Activated CD4-positive, alpha-beta memory T cell treated with anti-CD3 and anti-CD28 coated beads for 36 hours (primary cell): ENCODE measurements at regions of chr7 and their contacts with region 1.

Region 1: DNA sequence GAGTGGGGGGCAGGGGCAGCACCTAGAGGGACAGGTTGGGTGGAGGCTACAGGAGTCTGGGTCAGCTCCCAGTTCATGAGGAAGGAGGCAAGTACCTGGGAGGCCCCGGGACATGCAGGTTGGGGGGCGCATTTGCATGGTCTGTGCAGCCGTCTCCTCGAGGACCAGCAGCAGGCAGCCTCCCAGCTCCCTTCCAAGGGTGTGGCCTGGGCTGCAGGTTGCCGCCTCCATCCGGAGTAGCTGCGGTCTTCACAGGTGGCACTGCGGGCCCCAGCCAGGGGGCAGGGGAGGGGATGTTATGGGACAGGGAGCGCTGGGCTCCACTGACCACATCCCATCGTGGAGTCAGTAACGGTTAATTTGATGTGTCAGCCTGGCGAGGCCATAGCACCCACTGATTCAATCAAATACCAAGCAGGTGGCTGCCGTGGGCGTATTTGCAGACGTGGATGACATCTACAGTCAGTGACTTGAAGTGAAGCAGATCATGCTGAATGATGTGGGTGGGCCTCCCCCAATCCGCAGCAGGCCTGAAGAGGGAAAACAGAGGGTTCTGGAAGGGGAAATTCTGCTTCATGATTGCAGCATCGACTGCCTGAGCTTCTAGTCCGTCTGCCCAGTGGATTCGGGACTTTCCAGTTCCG is 81.6 kb downstream of the PRKAG2 start:
- DNase-seq: peak; percentile 95
- H3K4me3 Mint-ChIP-seq: peak overlapping the region; percentile 51
- H3K27ac Mint-ChIP-seq: peak overlapping the region; percentile 81
- H3K4me1 Mint-ChIP-seq: peaks cover 32% of the 10 kb centered on the region
- H3K27me3 Mint-ChIP-seq: no peaks in the 10 kb centered on the region

Region 2: DNA sequence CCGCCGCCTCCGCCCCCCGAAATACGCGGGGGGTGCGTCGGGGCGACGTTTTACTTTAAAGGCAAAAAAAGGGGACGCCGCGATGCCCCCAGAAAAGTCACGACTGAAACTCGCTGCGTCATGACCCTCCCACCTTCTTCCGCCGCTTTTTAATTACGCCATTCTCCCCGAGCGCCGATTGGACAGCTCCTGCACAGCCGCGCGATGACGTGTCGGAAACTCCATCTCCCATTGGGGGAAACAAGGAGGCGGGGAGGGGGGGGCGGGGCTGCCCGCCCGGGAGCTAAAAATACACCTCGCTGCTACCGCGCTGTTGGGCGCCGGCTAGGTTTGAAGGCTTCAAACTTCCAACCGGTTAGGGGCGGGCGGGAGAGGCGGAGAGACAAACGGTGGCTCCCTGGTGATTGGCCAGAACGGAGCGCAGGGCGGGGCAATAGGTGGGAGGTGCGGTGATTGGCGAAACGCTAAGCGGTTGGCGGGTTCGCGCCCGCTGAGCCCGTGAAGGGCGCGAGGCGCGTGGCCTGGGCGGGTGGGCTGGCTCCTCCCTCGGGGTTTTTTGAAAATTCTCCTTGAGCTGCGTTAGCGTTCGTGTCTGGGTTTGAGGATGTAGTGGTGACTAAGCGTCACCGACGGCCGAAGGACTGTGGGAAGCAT is 275.4 kb before region 1 on chr7 and contains the start of gene RHEB:
- CTCF ChIA-PET with region 1: no interaction called
- POLR2A ChIA-PET with region 1: no interaction called
- intact Hi-C with region 1: loop called (anchors 1 kb)
- DNase-seq: peak; percentile 99
- H3K4me3 Mint-ChIP-seq: peak within 1 kb of the TSS; percentile 92
- H3K27ac Mint-ChIP-seq: peak within 1 kb of the TSS; percentile 96
- H3K4me1 Mint-ChIP-seq: peaks cover 35% of the 10 kb centered on the region
- H3K27me3 Mint-ChIP-seq: no peaks in the 10 kb centered on the region
- total RNA-seq, gene RHEB: 62.0 to 64.6 TPM

Region 3: DNA sequence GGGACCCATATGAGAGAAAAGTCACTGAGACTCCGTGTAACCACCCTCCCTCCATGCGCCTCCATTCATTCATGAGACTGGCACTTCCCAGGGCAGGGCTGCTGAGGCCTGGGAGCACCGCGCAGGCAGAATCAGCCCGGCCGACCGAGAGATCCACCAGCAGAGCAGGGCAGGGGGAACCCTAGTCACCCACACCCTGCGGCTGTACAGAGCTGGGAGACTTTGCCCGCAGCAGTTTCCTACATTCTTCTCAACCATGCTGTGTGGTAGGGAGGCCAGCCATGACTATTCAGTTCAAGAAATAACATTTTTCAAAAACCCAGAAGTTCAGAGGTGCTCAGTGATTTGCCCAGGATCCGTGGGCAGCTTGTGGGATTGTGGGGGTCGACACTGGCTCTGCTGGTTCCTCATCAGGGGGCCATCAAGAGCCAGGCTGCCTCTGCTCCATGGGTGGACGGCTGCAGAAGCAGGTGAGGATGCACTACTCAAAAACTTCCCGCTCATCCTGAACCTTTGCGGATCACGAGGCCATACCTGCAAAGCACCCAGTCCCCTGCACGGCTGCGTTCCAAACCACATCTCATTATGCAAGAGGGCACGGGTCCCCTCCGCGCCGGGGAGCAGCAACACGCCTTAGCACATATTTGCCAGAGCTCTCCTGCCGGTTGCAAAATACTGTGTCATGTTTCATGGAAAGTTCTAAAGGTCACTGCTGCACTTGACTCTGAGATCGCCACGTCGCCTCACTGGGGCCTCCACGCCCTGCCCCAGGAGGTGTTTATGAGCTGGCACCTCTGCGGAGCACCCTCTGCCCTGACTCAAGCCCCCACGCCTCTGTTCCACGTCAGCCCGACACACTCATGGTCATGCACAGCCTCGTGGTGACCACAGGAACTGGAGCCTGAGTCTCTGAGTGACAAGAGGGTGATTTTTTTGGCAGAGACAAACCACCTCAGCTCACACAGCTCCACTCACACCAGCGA is 50.3 kb before region 1 on chr7:
- CTCF ChIA-PET with region 1: no interaction called
- POLR2A ChIA-PET with region 1: no interaction called
- intact Hi-C with region 1: loop called (anchors 2 kb)
- DNase-seq: peak; percentile 80
- H3K4me3 Mint-ChIP-seq: no peak overlapping the region
- H3K27ac Mint-ChIP-seq: no peak overlapping the region
- H3K4me1 Mint-ChIP-seq: peaks cover 41% of the 10 kb centered on the region
- H3K27me3 Mint-ChIP-seq: no peaks in the 10 kb centered on the region

Region 4: GRCh38 chr7:151769188-151769841 is 26.0 kb before region 1 on chr7:
- CTCF ChIA-PET with region 1: no interaction called
- POLR2A ChIA-PET with region 1: no interaction called
- intact Hi-C with region 1: loop called (anchors 1 kb)
- DNase-seq: peak; percentile 61
- H3K4me3 Mint-ChIP-seq: peak overlapping the region; percentile 24
- H3K27ac Mint-ChIP-seq: peak overlapping the region; percentile 87
- H3K4me1 Mint-ChIP-seq: peaks cover 47% of the 10 kb centered on the region
- H3K27me3 Mint-ChIP-seq: no peaks in the 10 kb centered on the region

Region 5: GRCh38 chr7:151838861-151839391 is 43.6 kb after region 1 on chr7:
- CTCF ChIA-PET with region 1: no interaction called
- POLR2A ChIA-PET with region 1: no interaction called
- intact Hi-C with region 1: loop called (anchors 5 kb)
- DNase-seq: peak; percentile 69
- H3K4me3 Mint-ChIP-seq: peak overlapping the region; percentile 48
- H3K27ac Mint-ChIP-seq: peak overlapping the region; percentile 62
- H3K4me1 Mint-ChIP-seq: peaks cover 27% of the 10 kb centered on the region
- H3K27me3 Mint-ChIP-seq: no peaks in the 10 kb centered on the region

Region 6: GRCh38 chr7:152336754-152337368 is 541.6 kb after region 1 on chr7:
- CTCF ChIA-PET with region 1: no interaction called
- POLR2A ChIA-PET with region 1: no interaction called
- intact Hi-C with region 1: loop called (anchors 2 kb)
- DNase-seq: no peak
- H3K4me3 Mint-ChIP-seq: no peak overlapping the region
- H3K27ac Mint-ChIP-seq: peak overlapping the region; percentile 74
- H3K4me1 Mint-ChIP-seq: peaks cover 38% of the 10 kb centered on the region
- H3K27me3 Mint-ChIP-seq: no peaks in the 10 kb centered on the region